ENCODE measurements at regions of chr12 and their contacts with region 1.

Region 1: DNA sequence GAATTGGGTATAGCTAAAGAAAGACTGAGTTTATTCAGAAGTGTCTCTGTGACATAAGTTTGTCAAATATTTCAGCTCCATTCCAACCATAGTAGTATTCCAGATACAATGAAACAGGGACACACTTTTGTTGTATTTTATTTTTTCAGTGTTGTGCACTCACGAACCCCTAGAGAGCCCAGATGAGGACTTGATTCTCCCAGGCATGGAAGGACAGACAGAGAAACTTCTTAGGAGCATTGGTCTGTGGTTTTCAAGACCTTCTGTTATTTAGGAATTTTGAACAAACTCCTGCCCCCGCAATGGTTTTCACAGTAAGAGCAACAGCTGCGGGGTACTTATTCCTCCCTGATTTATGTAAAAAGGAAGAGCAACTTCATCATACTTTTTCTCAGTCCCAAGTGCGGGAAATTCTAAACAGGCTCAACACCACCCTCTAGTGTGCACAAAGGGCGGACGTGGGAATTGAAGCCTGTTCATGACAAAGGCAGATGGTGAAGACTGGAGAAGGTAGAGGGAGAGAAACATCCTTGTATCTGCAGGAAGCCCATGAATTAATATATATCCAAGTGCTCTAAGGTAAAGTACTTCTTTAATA is 147.6 kb downstream of the PAH start:
- DNase-seq: peak; percentile 59
- H3K4me3 Mint-ChIP-seq: no peak overlapping the region
- H3K27ac Mint-ChIP-seq: no peak overlapping the region
- H3K4me1 Mint-ChIP-seq: no peaks in the 10 kb centered on the region
- H3K27me3 Mint-ChIP-seq: peaks cover 2% of the 10 kb centered on the region

Region 2: DNA sequence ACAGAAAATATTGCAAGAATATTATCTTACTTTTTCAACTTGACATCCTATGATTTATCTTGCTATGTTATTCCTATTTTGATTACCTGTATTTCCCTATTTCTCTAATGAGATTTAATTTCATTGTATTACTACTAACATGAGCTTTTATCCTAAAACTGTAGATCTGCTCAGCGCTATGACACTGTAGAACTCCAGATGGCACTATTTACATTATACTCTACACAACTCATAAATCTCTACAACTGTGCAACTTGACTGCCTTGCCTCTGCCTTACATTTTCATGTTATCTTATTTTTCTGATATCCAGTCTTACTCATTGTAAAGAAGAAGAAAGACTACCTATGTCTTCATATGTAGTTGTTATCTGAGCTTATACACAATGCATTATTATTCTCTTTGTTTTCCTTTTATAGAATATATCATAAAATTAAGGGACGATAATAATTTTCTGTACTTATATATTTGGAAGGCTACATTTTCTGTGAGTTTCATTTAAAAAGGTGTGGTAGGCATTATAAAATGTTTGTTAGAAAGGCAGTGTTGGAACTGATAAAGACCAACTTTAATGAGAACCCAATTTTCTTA is 673.6 kb before region 1 on chr12:
- CTCF ChIA-PET with region 1: no interaction called
- intact Hi-C with region 1: loop called (anchors 2 kb)
- DNase-seq: no peak
- H3K4me3 Mint-ChIP-seq: no peak overlapping the region
- H3K27ac Mint-ChIP-seq: no peak overlapping the region
- H3K4me1 Mint-ChIP-seq: no peaks in the 10 kb centered on the region
- H3K27me3 Mint-ChIP-seq: no peaks in the 10 kb centered on the region

Region 3: GRCh38 chr12:102300824-102301461 is 468.5 kb before region 1 on chr12:
- CTCF ChIA-PET with region 1: no interaction called
- intact Hi-C with region 1: loop called (anchors 10 kb)
- DNase-seq: peak; percentile 21
- H3K4me3 Mint-ChIP-seq: no peak overlapping the region
- H3K27ac Mint-ChIP-seq: no peak overlapping the region
- H3K4me1 Mint-ChIP-seq: no peaks in the 10 kb centered on the region
- H3K27me3 Mint-ChIP-seq: peaks cover 3% of the 10 kb centered on the region

Region 4: GRCh38 chr12:102797528-102797927 is 28.1 kb after region 1 on chr12:
- CTCF ChIA-PET with region 1: no interaction called
- intact Hi-C with region 1: no loop called
- DNase-seq: no peak
- H3K4me3 Mint-ChIP-seq: no peak overlapping the region
- H3K27ac Mint-ChIP-seq: no peak overlapping the region
- H3K4me1 Mint-ChIP-seq: no peaks in the 10 kb centered on the region
- H3K27me3 Mint-ChIP-seq: no peaks in the 10 kb centered on the region

Region 5: DNA sequence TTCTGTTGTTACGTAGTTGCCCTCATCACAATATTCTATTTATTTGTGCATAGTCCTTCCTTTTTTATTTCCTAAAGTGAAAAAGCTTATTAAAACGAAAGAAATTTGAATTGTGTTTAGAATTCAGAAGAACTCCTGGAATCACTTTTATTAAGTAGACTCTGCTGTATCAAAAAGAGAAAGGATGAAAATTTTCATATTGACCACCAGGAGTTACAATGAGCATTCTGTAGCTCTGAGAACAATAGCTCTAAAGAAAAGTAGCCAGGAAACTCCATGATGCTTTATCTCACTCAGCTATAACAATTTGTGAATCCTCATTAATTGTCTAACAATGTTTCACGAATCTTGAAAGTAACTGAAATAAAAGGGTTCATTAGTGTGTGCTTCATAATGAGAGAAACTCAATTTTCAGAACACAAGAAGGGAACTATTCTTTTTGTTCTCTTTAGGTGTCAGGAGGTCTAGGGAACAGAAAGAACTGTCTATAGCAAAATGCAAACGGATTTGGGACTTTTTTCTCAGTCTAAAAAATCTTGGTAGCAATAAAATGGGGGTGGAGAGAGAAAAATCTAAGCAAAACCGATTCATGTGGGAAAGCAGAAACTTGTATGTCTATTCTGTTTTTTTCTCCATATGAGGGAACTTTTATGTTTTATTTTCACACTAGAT is 207.3 kb after region 1 on chr12:
- CTCF ChIA-PET with region 1: no interaction called
- intact Hi-C with region 1: no loop called
- DNase-seq: no peak
- H3K4me3 Mint-ChIP-seq: no peak overlapping the region
- H3K27ac Mint-ChIP-seq: no peak overlapping the region
- H3K4me1 Mint-ChIP-seq: no peaks in the 10 kb centered on the region
- H3K27me3 Mint-ChIP-seq: peaks cover 4% of the 10 kb centered on the region